Activated naive CD4-positive, alpha-beta T cell treated with anti-CD3 and anti-CD28 coated beads for 36 hours (primary cell): ENCODE measurements at regions of chr1 and their contacts with region 1.

Region 1: GRCh38 chr1:198829944-198830343 is 191.1 kb downstream of the PTPRC start:
- DNase-seq: peak; percentile 23
- H3K4me3 Mint-ChIP-seq: no peak overlapping the region
- H3K27ac Mint-ChIP-seq: no peak overlapping the region
- H3K4me1 Mint-ChIP-seq: no peaks in the 10 kb centered on the region
- H3K27me3 Mint-ChIP-seq: no peaks in the 10 kb centered on the region

Region 2: GRCh38 chr1:198809247-198809646 is 20.7 kb before region 1 on chr1:
- CTCF ChIA-PET with region 1: no interaction called
- intact Hi-C with region 1: no loop called
- DNase-seq: no peak
- H3K4me3 Mint-ChIP-seq: no peak overlapping the region
- H3K27ac Mint-ChIP-seq: no peak overlapping the region
- H3K4me1 Mint-ChIP-seq: no peaks in the 10 kb centered on the region
- H3K27me3 Mint-ChIP-seq: no peaks in the 10 kb centered on the region

Region 3: DNA sequence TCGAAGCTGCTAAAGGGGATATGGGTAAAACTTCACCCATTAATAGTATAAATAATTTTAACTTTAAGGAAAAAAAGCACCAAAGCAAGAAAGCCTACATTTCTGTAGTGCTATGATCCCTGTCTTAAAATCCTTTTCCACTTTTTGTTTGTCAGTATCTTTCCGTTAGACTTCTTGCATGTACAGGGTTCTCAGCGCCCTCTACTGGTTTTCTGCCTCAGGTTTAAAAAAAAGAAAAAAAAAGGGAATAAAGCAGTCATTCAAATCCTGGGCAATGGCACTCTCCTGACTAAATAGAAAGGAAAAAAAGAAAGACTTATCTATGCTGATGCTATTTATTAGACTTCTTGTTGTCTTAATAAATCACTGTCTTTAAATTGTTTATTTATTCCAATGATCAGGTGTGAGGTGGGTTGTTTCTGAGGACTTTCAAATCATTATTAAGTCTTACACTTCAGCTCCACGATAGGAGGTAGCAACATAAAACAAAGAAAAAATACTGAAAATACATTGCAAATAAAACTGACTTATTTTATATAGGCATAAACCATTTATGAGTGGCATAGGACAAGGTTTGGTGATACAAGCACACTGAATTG is 722.1 kb after region 1 on chr1:
- CTCF ChIA-PET with region 1: no interaction called
- intact Hi-C with region 1: loop called (anchors 10 kb)
- DNase-seq: peak; percentile 61
- H3K4me3 Mint-ChIP-seq: no peak overlapping the region
- H3K27ac Mint-ChIP-seq: no peak overlapping the region
- H3K4me1 Mint-ChIP-seq: no peaks in the 10 kb centered on the region
- H3K27me3 Mint-ChIP-seq: peaks cover 10% of the 10 kb centered on the region

Region 4: DNA sequence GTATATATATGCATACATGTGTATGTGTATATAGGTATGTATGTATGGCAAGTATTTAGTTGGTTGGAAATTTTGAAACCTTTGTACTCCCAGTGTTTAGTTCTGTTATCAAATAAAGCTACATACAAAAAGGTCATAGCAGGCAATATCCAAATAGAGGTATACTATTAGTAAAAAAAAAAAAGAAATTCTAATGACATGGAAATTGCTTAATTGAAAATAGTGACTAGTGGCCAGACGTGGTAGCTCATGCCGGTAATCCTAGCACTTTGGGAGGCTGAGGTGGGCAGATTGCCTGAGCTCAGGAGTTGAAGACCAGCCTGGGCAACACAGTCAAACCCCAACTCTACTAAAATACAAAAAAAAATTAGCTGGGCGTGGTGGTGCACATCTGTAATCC is 846.0 kb after region 1 on chr1:
- CTCF ChIA-PET with region 1: no interaction called
- intact Hi-C with region 1: no loop called
- DNase-seq: no peak
- H3K4me3 Mint-ChIP-seq: no peak overlapping the region
- H3K27ac Mint-ChIP-seq: no peak overlapping the region
- H3K4me1 Mint-ChIP-seq: no peaks in the 10 kb centered on the region
- H3K27me3 Mint-ChIP-seq: peaks cover 6% of the 10 kb centered on the region